ENCODE measurements at regions of chr20 and their contacts with region 1.

Region 1: DNA sequence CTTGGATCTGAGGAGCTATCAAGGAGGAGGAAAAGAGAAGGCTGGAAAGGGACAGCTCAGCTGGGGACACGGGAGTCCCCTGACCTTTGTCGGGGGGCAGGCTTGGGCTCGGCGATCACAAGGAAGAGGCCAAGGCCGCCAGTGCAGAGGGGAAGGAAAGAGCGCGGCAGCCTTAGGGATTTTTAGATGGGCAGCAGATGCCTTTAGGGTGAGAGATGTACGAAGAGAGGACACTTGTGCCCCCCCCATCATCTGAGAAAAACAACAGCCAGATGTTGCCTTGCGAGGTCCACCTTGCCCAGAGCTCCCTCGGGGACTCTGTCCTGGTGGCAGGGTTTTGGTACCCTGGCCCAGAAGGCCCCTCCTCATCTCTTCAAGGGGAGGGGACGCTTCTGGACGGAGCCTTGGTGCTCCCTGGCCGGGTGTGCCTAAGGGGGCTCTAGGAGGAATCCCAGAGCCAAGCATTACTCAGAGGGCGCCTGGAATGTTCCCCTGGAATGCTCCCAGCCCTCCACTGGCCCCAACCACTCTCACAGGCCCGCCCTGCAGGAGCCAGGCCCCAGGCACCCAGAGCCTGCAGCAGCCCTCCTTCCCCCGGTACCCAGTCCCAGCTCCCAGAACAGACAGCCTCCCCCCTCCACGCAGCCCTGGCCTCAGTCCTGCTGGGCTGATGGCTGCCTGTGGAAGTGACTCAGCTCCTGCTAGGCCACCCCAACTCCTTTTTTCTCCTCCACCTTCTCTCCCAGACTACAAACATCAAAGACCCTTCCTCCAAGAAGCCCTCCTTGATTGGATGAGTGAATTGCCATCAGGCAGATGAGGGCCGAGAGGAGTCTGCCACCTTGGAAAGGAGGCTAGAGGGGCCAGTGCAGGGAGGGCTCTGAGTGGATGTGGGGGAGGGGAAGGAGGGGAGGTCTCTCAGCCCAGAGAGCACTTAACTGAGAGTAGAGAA is 1.8 kb downstream of the ADAM33 start:
- DNase-seq: no peak
- H3K4me3 ChIP-seq: no peak overlapping the region
- H3K27ac ChIP-seq: no peak overlapping the region
- H3K4me1 ChIP-seq: peaks cover 3% of the 10 kb centered on the region
- H3K27me3 ChIP-seq: peaks cover 14% of the 10 kb centered on the region
- CTCF ChIP-seq: no peak

Region 2: DNA sequence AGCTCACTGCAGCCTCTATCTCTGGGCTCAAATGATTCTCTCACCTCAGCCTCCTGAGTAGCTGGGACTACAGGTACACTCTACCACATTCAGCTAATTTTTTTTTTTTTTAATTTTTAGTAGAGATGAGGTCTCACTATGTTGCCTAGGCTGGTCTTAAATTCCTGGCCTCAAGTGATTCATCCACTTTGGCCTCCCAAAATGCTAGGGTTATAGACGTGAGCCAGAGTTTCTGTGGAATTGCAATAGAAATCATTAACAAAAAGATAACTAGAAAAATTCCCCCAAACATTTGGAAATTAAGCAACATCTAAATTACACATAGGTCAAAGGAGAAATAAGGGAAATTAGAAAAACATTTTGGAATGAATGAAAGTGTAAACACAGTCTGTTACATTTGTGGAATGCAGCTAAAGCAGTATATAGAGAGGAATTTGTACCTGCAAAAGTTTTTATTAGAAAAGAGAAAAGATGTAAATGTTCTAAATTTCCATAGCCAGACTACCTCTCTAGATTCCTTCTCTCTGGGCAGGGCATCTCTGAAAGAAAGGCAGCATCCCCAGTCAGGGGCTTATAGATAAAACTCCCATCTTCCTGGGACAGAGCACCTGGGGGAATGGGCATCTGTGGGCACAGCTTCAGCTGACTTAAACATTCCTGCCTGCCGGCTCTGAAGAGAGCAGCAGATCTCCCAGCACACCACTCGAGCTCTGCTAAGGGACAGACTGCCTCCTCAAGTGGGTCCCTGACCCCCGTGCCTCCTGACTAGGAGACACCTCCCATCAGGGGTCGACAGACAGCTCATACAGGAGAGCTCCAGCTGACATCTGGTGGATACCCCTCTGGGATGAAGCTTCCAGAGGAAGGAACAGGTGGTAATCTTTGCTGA is 157.9 kb before region 1 on chr20:
- CTCF ChIA-PET with region 1: no interaction called
- POLR2A ChIA-PET with region 1: no interaction called
- intact Hi-C with region 1: no loop called
- DNase-seq: no peak
- H3K4me3 ChIP-seq: no peak overlapping the region
- H3K27ac ChIP-seq: no peak overlapping the region
- H3K4me1 ChIP-seq: no peaks in the 10 kb centered on the region
- H3K27me3 ChIP-seq: no peaks in the 10 kb centered on the region
- CTCF ChIP-seq: no peak

Region 3: GRCh38 chr20:3630429-3630828 is 49.6 kb before region 1 on chr20:
- CTCF ChIA-PET with region 1: interaction called, 11 read pairs
- POLR2A ChIA-PET with region 1: no interaction called
- intact Hi-C with region 1: no loop called
- DNase-seq: no peak
- H3K4me3 ChIP-seq: no peak overlapping the region
- H3K27ac ChIP-seq: no peak overlapping the region
- H3K4me1 ChIP-seq: no peaks in the 10 kb centered on the region
- H3K27me3 ChIP-seq: no peaks in the 10 kb centered on the region
- CTCF ChIP-seq: no peak

Region 4: DNA sequence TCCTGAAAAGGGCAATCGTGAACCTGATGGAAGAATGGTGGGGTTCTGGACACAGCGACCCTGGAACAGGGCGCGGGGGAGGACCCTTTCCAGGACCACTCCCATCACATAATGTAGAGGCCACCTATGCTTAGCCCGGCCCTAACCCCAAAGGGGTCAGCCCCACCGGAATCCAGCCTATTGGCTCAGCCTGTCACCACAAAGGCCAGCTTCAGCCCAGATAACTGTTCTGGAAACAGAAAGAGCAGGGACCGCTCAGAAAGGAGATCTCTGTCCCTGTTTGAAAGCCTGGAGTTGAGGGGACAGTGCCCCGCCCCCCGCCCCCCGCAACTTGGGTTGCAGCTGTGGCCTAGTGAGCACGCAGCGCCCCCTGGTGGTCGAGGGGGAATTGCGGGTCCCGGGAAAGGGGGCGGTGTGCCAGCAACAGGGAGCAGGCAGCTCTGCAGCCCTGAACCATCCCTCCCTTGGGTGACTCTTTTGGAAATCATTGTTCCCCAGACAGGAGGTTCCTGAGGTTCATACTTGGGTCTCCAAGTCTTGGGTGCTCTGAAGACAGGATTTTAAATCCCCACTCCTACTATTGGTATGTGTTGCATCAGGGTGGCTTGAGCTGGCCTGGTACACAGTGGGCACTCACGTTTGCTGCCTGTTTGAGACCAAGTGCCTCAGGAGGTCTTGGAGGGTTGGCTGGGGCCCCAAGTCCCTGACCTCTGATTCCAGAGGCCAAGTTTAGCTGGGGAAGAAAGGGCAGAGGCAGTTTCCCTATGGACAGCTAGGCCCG is 30.9 kb after region 1 on chr20:
- CTCF ChIA-PET with region 1: interaction called, 25 read pairs
- POLR2A ChIA-PET with region 1: interaction called, 3 read pairs
- intact Hi-C with region 1: loop called (anchors 1 kb)
- DNase-seq: peak; percentile 80
- H3K4me3 ChIP-seq: no peak overlapping the region
- H3K27ac ChIP-seq: no peak overlapping the region
- H3K4me1 ChIP-seq: no peaks in the 10 kb centered on the region
- H3K27me3 ChIP-seq: no peaks in the 10 kb centered on the region
- CTCF ChIP-seq: peak; percentile 98

Region 5: GRCh38 chr20:3854462-3854871 is 174.4 kb after region 1 on chr20:
- CTCF ChIA-PET with region 1: interaction called, 3 read pairs
- POLR2A ChIA-PET with region 1: no interaction called
- intact Hi-C with region 1: loop called (anchors 5 kb)
- DNase-seq: no peak
- H3K4me3 ChIP-seq: no peak overlapping the region
- H3K27ac ChIP-seq: no peak overlapping the region
- H3K4me1 ChIP-seq: no peaks in the 10 kb centered on the region
- H3K27me3 ChIP-seq: no peaks in the 10 kb centered on the region
- CTCF ChIP-seq: no peak